ENCODE measurements at regions of chr11 and their contacts with region 1.

Region 1: GRCh38 chr11:38345289-38345804 is 1747.3 kb upstream of the RAG2 start:
- DNase-seq: no peak
- ATAC-seq: no peak
- H3K4me3 ChIP-seq: no peak overlapping the region
- H3K4me3 Mint-ChIP-seq: no peak overlapping the region
- H3K27ac ChIP-seq: no peak overlapping the region
- H3K27ac Mint-ChIP-seq: no peak overlapping the region
- H3K4me1 ChIP-seq: no peaks in the 10 kb centered on the region
- H3K4me1 Mint-ChIP-seq: no peaks in the 10 kb centered on the region
- H3K27me3 ChIP-seq: no peaks in the 10 kb centered on the region
- H3K27me3 Mint-ChIP-seq: no peaks in the 10 kb centered on the region
- CTCF ChIP-seq: no peak

Region 2: GRCh38 chr11:38206663-38207062 is 138.7 kb before region 1 on chr11:
- CTCF ChIA-PET with region 1: no interaction called
- POLR2A ChIA-PET with region 1: no interaction called
- intact Hi-C with region 1: loop called in 1 of 2 experiments (anchors 5 kb)
- DNase-seq: no peak
- ATAC-seq: no peak
- H3K4me3 ChIP-seq: no peak overlapping the region
- H3K4me3 Mint-ChIP-seq: no peak overlapping the region
- H3K27ac ChIP-seq: no peak overlapping the region
- H3K27ac Mint-ChIP-seq: no peak overlapping the region
- H3K4me1 ChIP-seq: no peaks in the 10 kb centered on the region
- H3K4me1 Mint-ChIP-seq: no peaks in the 10 kb centered on the region
- H3K27me3 ChIP-seq: no peaks in the 10 kb centered on the region
- H3K27me3 Mint-ChIP-seq: no peaks in the 10 kb centered on the region
- CTCF ChIP-seq: no peak

Region 3: GRCh38 chr11:38356255-38356654 is 10.9 kb after region 1 on chr11:
- CTCF ChIA-PET with region 1: no interaction called
- POLR2A ChIA-PET with region 1: no interaction called
- intact Hi-C with region 1: no loop called
- DNase-seq: no peak
- ATAC-seq: no peak
- H3K4me3 ChIP-seq: no peak overlapping the region
- H3K4me3 Mint-ChIP-seq: no peak overlapping the region
- H3K27ac ChIP-seq: no peak overlapping the region
- H3K27ac Mint-ChIP-seq: no peak overlapping the region
- H3K4me1 ChIP-seq: no peaks in the 10 kb centered on the region
- H3K4me1 Mint-ChIP-seq: no peaks in the 10 kb centered on the region
- H3K27me3 ChIP-seq: no peaks in the 10 kb centered on the region
- H3K27me3 Mint-ChIP-seq: no peaks in the 10 kb centered on the region
- CTCF ChIP-seq: no peak

Region 4: DNA sequence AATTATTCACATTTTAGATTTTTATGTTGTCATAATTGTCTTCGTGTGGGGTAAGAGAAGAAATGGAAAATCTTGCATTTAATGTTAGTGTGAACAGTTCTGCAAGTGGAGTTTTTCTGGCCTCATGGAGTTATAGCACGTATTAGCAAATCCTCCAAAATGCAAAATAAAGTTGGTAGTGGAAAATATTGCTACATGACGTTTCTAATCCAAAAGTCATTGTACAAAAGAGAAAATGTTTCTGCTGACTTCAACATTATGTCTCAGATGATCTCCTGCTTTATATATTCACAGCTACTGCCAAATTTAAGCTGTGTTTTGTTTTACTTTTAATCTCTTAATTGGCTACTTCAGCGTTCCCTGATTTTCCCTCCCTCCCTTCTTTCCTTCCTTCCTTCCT is 56.7 kb after region 1 on chr11:
- CTCF ChIA-PET with region 1: no interaction called
- POLR2A ChIA-PET with region 1: no interaction called
- intact Hi-C with region 1: loop called in 1 of 2 experiments (anchors 5 kb)
- DNase-seq: no peak
- ATAC-seq: no peak
- H3K4me3 ChIP-seq: no peak overlapping the region
- H3K4me3 Mint-ChIP-seq: no peak overlapping the region
- H3K27ac ChIP-seq: no peak overlapping the region
- H3K27ac Mint-ChIP-seq: no peak overlapping the region
- H3K4me1 ChIP-seq: no peaks in the 10 kb centered on the region
- H3K4me1 Mint-ChIP-seq: no peaks in the 10 kb centered on the region
- H3K27me3 ChIP-seq: no peaks in the 10 kb centered on the region
- H3K27me3 Mint-ChIP-seq: no peaks in the 10 kb centered on the region
- CTCF ChIP-seq: no peak